ENCODE measurements at regions of chr1 and their contacts with region 1.

Region 1: DNA sequence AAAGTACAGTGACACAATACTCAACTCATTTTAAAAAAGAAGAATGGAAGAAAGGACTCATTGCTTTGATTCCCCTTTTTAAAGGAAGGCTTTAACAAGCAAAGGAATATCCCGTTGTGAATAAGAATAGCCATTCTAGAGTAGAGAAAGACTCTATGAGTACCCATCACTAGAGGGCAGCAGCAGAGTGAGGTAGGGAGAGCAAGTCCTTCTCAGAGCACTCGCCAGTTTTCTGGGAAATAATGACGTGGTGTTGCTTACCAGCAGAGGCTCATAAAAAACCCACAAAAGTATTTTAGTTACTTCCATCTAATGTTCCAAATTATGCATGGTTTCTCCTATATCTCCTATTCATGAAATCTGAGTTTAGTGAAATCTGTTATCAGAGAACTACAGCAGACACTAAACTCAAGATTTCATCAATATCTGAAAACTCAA is 74.6 kb downstream of the USP24 start:
- DNase-seq: peak; percentile 80
- H3K4me3 ChIP-seq: no peak overlapping the region
- H3K27me3 ChIP-seq: no peaks in the 10 kb centered on the region
- CTCF ChIP-seq: peak; percentile 81

Region 2: DNA sequence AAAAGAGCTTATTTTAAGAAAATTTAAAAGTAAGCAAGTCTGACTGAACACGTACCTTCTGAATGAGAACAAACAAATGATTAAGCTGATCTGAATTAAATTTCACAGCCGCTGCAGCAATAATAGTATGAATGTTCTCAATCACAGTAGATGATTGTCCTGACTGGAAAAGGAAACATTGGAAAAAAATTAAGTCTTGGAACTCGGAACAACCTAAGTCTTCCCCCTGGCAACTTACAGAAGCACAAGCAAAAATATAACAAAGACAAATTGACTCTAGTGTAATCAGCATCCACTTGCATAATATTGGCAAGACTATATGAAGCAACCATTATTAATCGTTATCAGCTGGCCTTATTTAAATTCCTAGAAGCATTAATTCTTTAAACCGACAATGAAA is 14.1 kb after region 1 on chr1:
- CTCF ChIA-PET with region 1: interaction called, 17 read pairs
- POLR2A ChIA-PET with region 1: no interaction called
- DNase-seq: no peak
- H3K4me3 ChIP-seq: no peak overlapping the region
- H3K27me3 ChIP-seq: no peaks in the 10 kb centered on the region
- CTCF ChIP-seq: no peak

Region 3: GRCh38 chr1:55375617-55376258 is 235.2 kb after region 1 on chr1:
- CTCF ChIA-PET with region 1: no interaction called
- POLR2A ChIA-PET with region 1: no interaction called
- DNase-seq: no peak
- H3K4me3 ChIP-seq: no peak overlapping the region
- H3K27me3 ChIP-seq: no peaks in the 10 kb centered on the region
- CTCF ChIP-seq: peak; percentile 92

Region 4: DNA sequence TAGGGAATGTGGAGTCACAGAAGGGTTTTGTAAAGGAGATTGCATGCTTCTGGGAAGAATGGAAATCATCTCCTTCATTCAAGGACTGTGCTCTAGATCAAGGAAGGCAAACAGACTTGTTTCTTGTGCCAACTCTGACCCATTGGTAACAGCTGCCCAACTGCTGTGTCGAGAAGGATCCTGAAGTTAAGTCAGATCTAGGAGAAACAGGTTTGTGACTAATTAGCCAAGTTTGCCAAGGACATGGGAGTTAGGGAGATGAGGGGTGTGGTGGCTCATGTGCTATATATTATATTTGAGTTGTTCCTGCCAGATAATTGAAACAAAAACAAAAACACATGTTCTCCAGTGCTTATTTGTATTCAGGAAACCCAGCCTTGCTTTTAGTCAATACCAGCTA is 325.8 kb after region 1 on chr1:
- CTCF ChIA-PET with region 1: no interaction called
- POLR2A ChIA-PET with region 1: no interaction called
- DNase-seq: no peak
- H3K4me3 ChIP-seq: no peak overlapping the region
- H3K27me3 ChIP-seq: no peaks in the 10 kb centered on the region
- CTCF ChIP-seq: no peak